ENCODE measurements at regions of chr7 and their contacts with region 1.

Region 1: GRCh38 chr7:113421696-113422330 is 303.5 kb upstream of the SMIM30 start:
- DNase-seq: peak; percentile 86
- ATAC-seq: peak; percentile 99
- H3K4me3 ChIP-seq: no peak overlapping the region
- H3K27ac ChIP-seq: no peak overlapping the region
- H3K4me1 ChIP-seq: no peaks in the 10 kb centered on the region; the same call in 1 of the 2 replicates
- H3K27me3 ChIP-seq: no peaks in the 10 kb centered on the region
- CTCF ChIP-seq: peak; percentile 89

Region 2: GRCh38 chr7:113015032-113015645 is 406.7 kb before region 1 on chr7:
- CTCF ChIA-PET with region 1: no interaction called
- POLR2A ChIA-PET with region 1: no interaction called
- intact Hi-C with region 1: loop called (anchors 1 kb)
- DNase-seq: peak; percentile 50
- ATAC-seq: 0 out of 2 replicates have a peak, but pooled peaks have one; percentile 33
- H3K4me3 ChIP-seq: no peak overlapping the region
- H3K27ac ChIP-seq: no peak overlapping the region
- H3K4me1 ChIP-seq: no peaks in the 10 kb centered on the region
- H3K27me3 ChIP-seq: no peaks in the 10 kb centered on the region
- CTCF ChIP-seq: peak; percentile 64

Region 3: DNA sequence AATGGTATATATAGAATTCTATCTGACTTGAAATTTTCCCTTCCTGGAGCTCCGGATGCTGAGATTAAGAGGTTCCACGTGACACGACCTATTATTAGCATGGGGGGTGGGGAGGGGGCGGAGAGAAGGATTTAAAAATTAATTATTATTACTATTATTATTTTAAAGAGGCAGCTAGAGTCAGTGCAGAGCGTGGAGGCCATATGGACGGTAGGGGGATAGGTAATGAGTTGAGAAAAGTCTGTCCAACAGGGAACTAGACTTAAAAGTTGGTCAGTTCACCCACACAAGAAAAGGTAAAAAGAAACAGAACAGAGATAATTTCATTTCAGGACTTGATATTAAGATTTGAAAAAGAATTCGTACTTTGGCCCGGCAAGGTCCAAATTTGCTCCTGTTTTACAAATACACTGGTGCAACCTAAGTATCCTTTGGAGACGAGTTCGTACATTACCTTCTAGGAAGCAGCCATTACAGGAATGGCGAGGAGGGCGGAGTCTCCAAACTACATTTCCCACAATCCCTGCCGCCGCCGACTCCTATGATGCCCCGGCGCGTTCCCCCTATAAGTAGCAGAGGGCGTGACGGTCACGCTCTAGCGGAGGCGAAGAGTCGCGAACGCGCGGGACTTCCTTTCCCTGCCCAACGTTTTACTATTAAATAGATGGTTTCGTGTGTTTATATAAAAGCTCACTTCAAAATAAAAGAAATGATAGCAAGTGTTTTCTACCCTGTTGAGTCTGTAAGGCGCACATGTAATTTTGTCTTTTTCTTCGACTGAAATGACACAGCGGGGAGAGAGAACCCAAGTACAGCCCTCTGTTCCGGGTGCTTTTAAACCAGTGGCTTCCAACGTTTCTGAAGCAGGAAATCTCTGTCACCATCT is 303.5 kb before region 1 on chr7 and contains the start of gene SMIM30:
- CTCF ChIA-PET with region 1: interaction called, 14 read pairs
- POLR2A ChIA-PET with region 1: no interaction called
- intact Hi-C with region 1: no loop called
- DNase-seq: peak; percentile 81
- ATAC-seq: peak; percentile 100
- H3K4me3 ChIP-seq: peak within 1 kb of the TSS; percentile 91
- H3K27ac ChIP-seq: no peak within 1 kb of the TSS
- H3K4me1 ChIP-seq: peaks cover 4% of the 10 kb centered on the region; the same call in 1 of the 2 replicates
- H3K27me3 ChIP-seq: no peaks in the 10 kb centered on the region
- CTCF ChIP-seq: no peak
- total RNA-seq, gene SMIM30: 28.9 and 29.4 TPM in 2 replicates

Region 4: DNA sequence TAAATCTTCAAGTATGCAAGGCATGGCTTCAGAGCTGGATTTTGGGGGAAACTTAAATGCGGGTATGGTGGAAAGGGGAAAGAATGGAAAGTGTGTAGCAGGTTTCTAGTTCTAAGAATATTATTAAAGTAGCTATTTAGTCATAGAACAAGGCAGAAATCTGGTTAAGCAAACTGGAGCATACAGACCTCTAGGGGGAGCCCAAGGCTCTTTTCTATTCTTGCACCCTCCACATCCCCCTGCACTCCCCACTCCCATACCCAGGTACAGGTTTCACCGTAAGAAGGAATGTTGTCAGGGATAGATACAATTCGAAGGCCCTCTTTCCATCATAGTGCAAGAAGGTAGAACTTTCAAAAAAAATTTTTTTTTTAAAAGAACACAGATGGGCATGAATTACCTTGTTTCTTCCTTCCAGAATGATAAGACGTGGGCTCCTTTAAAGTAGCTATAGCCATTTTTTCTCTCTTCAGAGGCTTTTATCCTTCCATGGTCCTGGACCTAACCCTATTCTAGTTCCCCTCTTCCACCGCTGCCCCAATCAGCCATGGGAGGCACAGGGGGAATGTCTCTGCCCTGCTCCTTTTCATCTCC is 262.0 kb before region 1 on chr7:
- CTCF ChIA-PET with region 1: interaction called, 3 read pairs
- POLR2A ChIA-PET with region 1: no interaction called
- intact Hi-C with region 1: loop called (anchors 5 kb)
- DNase-seq: peak; percentile 38
- ATAC-seq: peak; percentile 57; the same call in 1 of the 2 replicates
- H3K4me3 ChIP-seq: no peak overlapping the region
- H3K27ac ChIP-seq: no peak overlapping the region
- H3K4me1 ChIP-seq: no peaks in the 10 kb centered on the region
- H3K27me3 ChIP-seq: no peaks in the 10 kb centered on the region
- CTCF ChIP-seq: peak; percentile 69

Region 5: DNA sequence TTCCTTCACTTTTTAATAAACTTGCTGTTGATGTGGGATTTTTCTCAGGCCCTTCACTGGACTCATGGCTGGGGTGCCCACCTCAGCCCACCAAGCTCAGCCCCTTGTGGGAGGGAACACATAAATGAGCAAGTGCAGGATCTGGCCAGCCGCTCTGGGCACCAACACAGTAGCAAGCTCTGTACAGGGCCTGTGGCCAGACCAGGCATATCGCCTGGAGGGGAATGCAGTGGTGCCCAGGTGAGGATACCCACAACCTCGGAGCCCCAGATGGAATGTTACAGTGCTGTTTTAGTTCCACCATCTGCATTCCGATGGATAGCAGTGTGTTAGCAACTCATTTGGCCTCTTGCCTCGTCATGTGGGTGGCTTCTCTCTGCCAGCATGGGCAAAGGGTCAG is 262.4 kb after region 1 on chr7:
- CTCF ChIA-PET with region 1: no interaction called
- POLR2A ChIA-PET with region 1: no interaction called
- intact Hi-C with region 1: no loop called
- DNase-seq: no peak
- ATAC-seq: no peak
- H3K4me3 ChIP-seq: no peak overlapping the region
- H3K27ac ChIP-seq: no peak overlapping the region
- H3K4me1 ChIP-seq: no peaks in the 10 kb centered on the region
- H3K27me3 ChIP-seq: no peaks in the 10 kb centered on the region
- CTCF ChIP-seq: no peak

Region 6: GRCh38 chr7:113698556-113699220 is 276.9 kb after region 1 on chr7:
- CTCF ChIA-PET with region 1: no interaction called
- POLR2A ChIA-PET with region 1: no interaction called
- intact Hi-C with region 1: loop called (anchors 5 kb)
- DNase-seq: peak; percentile 56
- ATAC-seq: no peak
- H3K4me3 ChIP-seq: no peak overlapping the region
- H3K27ac ChIP-seq: no peak overlapping the region
- H3K4me1 ChIP-seq: no peaks in the 10 kb centered on the region
- H3K27me3 ChIP-seq: no peaks in the 10 kb centered on the region
- CTCF ChIP-seq: peak; percentile 76

Measured in PC-3 (cell line).